Caco-2 (cell line): ENCODE measurements at regions of chr6 and their contacts with region 1.

Region 1: GRCh38 chr6:2695454-2696095 is 55.1 kb downstream of the MYLK4 start:
- DNase-seq: peak in 1 of 2 experiments; percentile 11
- H3K4me3 ChIP-seq: no peak overlapping the region
- H3K4me3 Mint-ChIP-seq: no peak overlapping the region
- H3K27ac Mint-ChIP-seq: no peak overlapping the region
- H3K4me1 ChIP-seq: 0 out of 2 replicates have a peak, but pooled peaks cover 3% of the 10 kb centered on the region
- H3K4me1 Mint-ChIP-seq: no peaks in the 10 kb centered on the region
- H3K27me3 ChIP-seq: no peaks in the 10 kb centered on the region
- H3K27me3 Mint-ChIP-seq: no peaks in the 10 kb centered on the region
- CTCF ChIP-seq: peak; percentile 20 to 41

Region 2: DNA sequence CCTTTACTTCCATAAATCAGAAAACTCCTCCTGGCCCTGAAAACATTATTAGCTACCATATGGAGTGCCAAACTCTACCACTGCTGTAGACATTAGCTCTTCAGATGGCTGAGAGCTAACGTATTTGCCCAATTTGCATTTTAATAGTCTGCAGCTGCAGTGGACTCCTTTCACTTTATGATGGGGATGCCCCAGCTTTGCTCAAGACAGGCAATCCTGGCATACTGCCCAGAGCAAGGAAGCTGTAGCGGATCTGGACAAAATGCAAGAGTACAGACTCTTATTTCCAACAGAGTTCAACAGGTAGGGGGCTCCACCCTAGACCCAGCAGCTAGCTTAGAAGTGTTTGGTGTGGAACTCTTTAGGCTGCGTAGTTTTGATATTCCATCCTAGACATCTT is 839.2 kb before region 1 on chr6:
- CTCF ChIA-PET with region 1: no interaction called
- POLR2A ChIA-PET with region 1: no interaction called
- intact Hi-C with region 1: loop called (anchors 5 kb)
- DNase-seq: no peak
- H3K4me3 ChIP-seq: no peak overlapping the region
- H3K4me3 Mint-ChIP-seq: no peak overlapping the region
- H3K27ac Mint-ChIP-seq: no peak overlapping the region
- H3K4me1 ChIP-seq: no peaks in the 10 kb centered on the region
- H3K4me1 Mint-ChIP-seq: no peaks in the 10 kb centered on the region
- H3K27me3 ChIP-seq: no peaks in the 10 kb centered on the region
- H3K27me3 Mint-ChIP-seq: no peaks in the 10 kb centered on the region
- CTCF ChIP-seq: no peak

Region 3: GRCh38 chr6:2055911-2056310 is 639.7 kb before region 1 on chr6:
- CTCF ChIA-PET with region 1: no interaction called
- POLR2A ChIA-PET with region 1: no interaction called
- intact Hi-C with region 1: no loop called
- DNase-seq: no peak
- H3K4me3 ChIP-seq: no peak overlapping the region
- H3K4me3 Mint-ChIP-seq: no peak overlapping the region
- H3K27ac Mint-ChIP-seq: no peak overlapping the region
- H3K4me1 ChIP-seq: no peaks in the 10 kb centered on the region
- H3K4me1 Mint-ChIP-seq: peaks cover 9% of the 10 kb centered on the region
- H3K27me3 ChIP-seq: no peaks in the 10 kb centered on the region
- H3K27me3 Mint-ChIP-seq: no peaks in the 10 kb centered on the region
- CTCF ChIP-seq: no peak

Region 4: DNA sequence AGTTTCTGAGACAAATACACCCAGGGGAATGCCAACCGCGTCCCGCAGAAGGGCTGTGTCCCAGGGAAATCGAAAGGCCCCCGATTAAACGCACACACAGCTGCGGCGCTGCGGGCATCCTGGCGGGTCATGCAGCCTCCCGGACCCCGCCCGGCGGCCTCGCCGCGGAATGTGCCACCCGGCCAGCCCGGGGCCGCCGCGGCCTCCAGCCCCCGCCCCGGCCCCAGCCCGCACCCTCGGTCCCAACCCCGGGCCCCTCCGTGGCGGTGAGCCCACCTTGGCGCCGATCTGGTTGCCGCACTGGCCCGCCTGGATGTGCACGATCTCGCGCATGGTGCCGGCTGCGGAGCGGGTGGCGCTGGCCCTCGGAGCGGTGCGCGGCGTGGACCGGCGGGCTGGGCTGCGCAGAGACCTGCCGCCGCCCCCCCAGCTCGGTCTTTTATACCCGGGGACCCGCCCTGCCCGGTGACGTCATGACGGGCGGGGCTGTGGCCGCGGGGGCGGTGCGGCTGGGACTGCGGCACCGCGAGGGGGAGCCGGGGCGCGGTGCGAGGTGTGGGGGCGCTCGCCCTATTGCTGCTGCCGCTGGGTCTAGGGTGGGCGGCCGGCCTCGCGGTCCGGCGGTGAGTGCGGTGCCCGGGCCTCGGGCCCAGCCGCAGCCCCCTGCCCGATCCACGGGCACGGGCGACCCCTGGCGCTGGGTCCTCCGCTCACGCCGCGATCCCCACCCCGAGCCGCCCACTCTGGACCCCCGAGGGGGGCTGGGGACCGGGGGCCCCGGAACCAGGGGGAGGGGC is 461.8 kb after region 1 on chr6 and contains the start of gene TUBB2A:
- CTCF ChIA-PET with region 1: no interaction called
- POLR2A ChIA-PET with region 1: no interaction called
- intact Hi-C with region 1: no loop called
- DNase-seq: peak; percentile 75 to 92
- H3K4me3 ChIP-seq: peak within 1 kb of the TSS; percentile 61
- H3K4me3 Mint-ChIP-seq: peak within 1 kb of the TSS; percentile 77
- H3K27ac Mint-ChIP-seq: peak within 1 kb of the TSS; percentile 64
- H3K4me1 ChIP-seq: peaks cover 13% of the 10 kb centered on the region; the same call in 1 of the 2 replicates
- H3K4me1 Mint-ChIP-seq: peaks cover 16% of the 10 kb centered on the region
- H3K27me3 ChIP-seq: no peaks in the 10 kb centered on the region
- H3K27me3 Mint-ChIP-seq: no peaks in the 10 kb centered on the region
- CTCF ChIP-seq: peak in 1 of 2 experiments; percentile 33
- total RNA-seq, gene TUBB2A: 89.8 and 90.7 TPM in 2 replicates